Activated CD4-positive, alpha-beta memory T cell treated with anti-CD3 and anti-CD28 coated beads, Interleukin-2, amount 10 ng/mL, durations not matched to agents 7 days and 5 days (primary cell): ENCODE measurements at regions of chr2 and their contacts with region 1.

Region 1: GRCh38 chr2:20661067-20661980 is 5.6 kb upstream of the GDF7 start:
- DNase-seq: peak; percentile 74
- H3K4me3 Mint-ChIP-seq: no peak overlapping the region
- H3K27ac Mint-ChIP-seq: no peak overlapping the region
- H3K4me1 Mint-ChIP-seq: peaks cover 10% of the 10 kb centered on the region
- H3K27me3 Mint-ChIP-seq: peaks cover 77% of the 10 kb centered on the region

Region 2: DNA sequence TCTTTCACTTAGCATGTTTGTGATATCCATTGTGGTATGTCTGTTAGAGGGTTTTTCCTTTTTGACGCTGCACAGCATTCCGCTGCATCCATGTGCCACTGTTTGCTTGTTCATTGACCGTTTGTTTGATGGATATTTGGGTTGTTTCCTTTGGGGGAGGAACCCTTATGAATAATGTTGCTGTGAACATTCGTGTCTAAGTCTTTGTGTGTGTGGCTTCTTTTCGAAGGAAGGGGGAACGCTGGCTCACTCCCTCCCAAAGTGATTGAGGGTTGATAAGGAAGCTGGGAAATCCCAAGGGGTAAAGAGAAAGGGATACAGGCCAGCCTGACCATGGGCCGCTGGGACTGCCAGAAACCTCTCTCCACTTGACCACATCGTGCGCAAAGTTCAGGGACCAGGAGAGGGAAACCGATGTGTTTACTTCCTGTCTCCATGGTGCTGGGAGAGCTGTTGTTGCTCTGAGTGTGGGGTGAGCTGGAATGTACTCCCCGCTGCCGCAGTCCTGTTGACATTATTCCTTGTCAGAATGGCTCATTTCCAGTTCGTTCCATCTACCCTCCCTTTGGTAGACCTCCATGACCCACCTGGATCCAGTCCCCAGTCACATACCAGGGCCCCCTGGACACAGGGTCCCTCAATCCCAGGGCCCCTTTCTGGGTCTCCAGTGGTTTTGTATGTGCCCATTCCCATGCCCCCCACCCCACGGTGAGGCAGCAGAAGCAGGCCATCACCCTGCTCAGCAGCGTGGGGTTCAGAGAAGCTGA is 50.1 kb before region 1 on chr2:
- CTCF ChIA-PET with region 1: no interaction called
- POLR2A ChIA-PET with region 1: no interaction called
- DNase-seq: no peak
- H3K4me3 Mint-ChIP-seq: no peak overlapping the region
- H3K27ac Mint-ChIP-seq: no peak overlapping the region
- H3K4me1 Mint-ChIP-seq: no peaks in the 10 kb centered on the region
- H3K27me3 Mint-ChIP-seq: no peaks in the 10 kb centered on the region

Region 3: GRCh38 chr2:20675701-20676352 is 14.5 kb after region 1 on chr2:
- CTCF ChIA-PET with region 1: interaction called, 15 read pairs
- POLR2A ChIA-PET with region 1: interaction called, 11 read pairs
- DNase-seq: no peak
- H3K4me3 Mint-ChIP-seq: no peak overlapping the region
- H3K27ac Mint-ChIP-seq: no peak overlapping the region
- H3K4me1 Mint-ChIP-seq: no peaks in the 10 kb centered on the region
- H3K27me3 Mint-ChIP-seq: peaks cover 19% of the 10 kb centered on the region

Region 4: DNA sequence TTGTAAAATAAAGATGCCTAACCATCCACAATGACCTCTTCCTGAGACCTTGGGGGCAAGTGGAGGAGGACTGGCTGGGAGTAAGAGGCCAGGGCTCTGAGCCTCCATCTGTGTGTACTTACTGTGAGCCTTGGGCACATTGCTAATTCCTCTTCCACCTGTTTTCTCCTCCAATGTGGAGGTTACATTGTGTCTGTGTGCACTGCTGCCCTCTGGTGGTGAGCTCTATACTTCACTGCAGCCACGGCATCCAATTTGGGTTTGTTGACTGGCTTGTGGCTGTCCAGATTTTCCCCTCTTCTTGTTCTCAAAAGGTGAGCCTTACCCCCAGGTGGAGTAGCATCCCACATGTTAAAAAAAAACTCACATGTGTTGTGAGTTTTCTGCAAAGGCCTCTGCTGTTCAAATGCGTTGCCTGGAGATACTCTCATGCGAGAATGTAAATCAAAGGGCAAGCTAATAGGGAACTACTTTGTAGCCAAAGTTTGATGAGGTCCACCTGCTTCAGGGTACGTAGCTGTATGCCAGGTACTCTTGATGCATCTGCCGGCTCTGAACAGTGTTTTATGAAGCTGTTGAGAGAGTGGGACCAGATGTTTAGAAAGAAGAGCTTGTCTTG is 301.7 kb after region 1 on chr2:
- CTCF ChIA-PET with region 1: interaction called, 124 read pairs
- POLR2A ChIA-PET with region 1: no interaction called
- DNase-seq: peak; percentile 70
- H3K4me3 Mint-ChIP-seq: no peak overlapping the region
- H3K27ac Mint-ChIP-seq: no peak overlapping the region
- H3K4me1 Mint-ChIP-seq: no peaks in the 10 kb centered on the region
- H3K27me3 Mint-ChIP-seq: peaks cover 17% of the 10 kb centered on the region